Cardiac septum (tissue), 1 donor: ENCODE measurements at regions of chr21 and their contacts with region 1.

Region 1: DNA sequence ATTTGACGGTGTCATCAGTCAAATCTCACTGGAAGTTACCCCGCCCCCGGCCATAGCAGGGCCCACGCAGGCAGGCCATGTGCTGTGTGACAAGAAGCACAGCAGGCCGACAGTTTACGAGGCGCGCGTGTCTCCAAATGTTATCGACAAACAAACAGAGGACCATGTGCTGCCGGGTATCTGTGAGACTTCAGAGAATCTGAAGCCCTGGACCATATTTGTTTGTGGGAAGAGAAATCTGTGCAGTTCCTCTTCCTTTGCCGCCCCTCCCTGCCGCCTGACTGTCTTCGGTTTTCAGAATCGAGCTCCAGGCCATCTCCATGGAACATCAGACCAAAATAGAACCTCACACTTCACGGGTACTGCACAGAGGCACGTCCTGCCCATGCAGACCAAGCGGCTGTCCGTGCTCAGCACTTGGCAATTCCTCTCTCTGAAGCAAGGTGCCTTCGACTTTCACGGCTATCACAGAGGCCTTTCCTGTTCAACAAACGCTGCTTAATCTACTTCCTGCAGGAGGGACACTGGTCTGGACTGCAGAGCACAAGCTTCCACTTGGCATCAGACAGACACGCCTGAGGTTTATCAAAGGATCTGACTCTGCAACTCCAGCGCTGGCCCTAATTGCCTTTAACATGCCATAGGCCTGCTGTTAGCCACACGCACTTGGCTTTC is 135.7 kb upstream of the KRTAP19-8 start:
- DNase-seq: no peak

Region 2: DNA sequence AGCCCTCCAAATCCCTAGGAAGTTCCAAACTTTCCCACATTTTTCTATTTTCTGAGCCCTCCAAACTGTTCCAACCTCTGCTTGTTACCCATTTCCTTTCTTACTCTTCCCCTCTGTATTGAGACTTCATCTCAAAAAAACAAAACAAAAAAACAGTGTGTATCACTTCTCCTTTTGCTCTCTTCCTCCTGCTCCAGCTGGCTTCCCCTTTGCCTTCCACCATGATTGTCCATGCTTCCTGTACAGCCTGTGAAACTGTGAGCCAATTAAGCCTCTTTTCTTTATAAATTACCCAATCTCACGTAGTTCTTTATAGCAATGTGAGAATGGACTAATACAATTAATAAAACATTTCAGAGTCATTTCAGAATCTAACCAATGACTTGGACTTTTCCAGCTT is 66.1 kb before region 1 on chr21:
- intact Hi-C with region 1: loop called (anchors 5 kb)
- DNase-seq: no peak

Region 3: DNA sequence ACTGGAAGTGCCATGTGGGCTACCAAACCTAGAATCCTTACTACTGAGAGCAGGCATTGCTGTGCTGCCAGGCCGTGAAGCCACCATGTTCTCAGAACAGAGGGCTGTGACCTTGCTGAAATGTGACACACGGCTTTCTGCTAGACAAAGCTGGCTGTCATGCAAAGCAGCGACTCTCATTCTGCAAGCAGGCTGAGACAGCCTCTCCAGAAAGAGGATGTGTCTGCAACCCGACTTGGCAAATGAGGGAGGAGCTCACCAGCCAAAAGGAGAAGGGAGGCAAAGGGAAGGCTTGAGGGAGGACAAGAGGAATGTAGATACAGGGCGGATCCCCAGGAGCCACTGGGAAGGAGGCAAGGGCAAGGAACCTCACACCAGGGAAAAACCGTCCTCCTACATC is 50.0 kb before region 1 on chr21:
- intact Hi-C with region 1: loop called (anchors 5 kb)
- DNase-seq: no peak